ENCODE measurements at regions of chr2 and their contacts with region 1.

Region 1: GRCh38 chr2:38619458-38620164 is 16.9 kb upstream of the HNRNPLL start:
- DNase-seq: no peak
- H3K4me3 Mint-ChIP-seq: no peak overlapping the region
- H3K27ac Mint-ChIP-seq: peak overlapping the region; percentile 19
- H3K4me1 Mint-ChIP-seq: peaks cover 53% of the 10 kb centered on the region
- H3K27me3 Mint-ChIP-seq: no peaks in the 10 kb centered on the region

Region 2: GRCh38 chr2:38602732-38603401 is 16.7 kb before region 1 on chr2 and contains the start of gene HNRNPLL:
- intact Hi-C with region 1: no loop called
- DNase-seq: peak; percentile 95
- H3K4me3 Mint-ChIP-seq: peak within 1 kb of the TSS; percentile 90
- H3K27ac Mint-ChIP-seq: peak within 1 kb of the TSS; percentile 91
- H3K4me1 Mint-ChIP-seq: peaks cover 59% of the 10 kb centered on the region
- H3K27me3 Mint-ChIP-seq: no peaks in the 10 kb centered on the region
- total RNA-seq, gene HNRNPLL: 65.7 and 67.7 TPM in 2 replicates

Region 3: DNA sequence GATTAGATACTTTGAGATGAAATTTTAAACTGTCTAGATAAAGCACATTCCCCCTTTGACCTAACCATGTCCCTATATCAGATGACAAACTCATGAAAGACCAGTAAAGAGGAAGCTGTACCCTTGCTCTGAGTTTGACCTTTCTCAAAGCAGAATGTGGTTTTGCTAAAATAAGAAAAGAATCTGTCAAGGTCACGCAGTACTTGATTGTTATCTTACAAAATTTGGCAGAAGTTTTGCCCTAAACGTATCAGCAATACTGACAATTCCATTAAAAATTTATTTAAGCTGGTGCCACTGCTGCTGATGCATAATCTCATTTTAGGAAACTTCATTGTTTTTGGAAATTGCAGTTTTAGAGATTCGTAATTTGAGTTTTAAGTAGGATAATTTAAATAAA is 15.1 kb after region 1 on chr2:
- intact Hi-C with region 1: loop called (anchors 2 kb)
- DNase-seq: no peak
- H3K4me3 Mint-ChIP-seq: peak overlapping the region; percentile 8
- H3K27ac Mint-ChIP-seq: peak overlapping the region; percentile 21
- H3K4me1 Mint-ChIP-seq: peaks cover 50% of the 10 kb centered on the region
- H3K27me3 Mint-ChIP-seq: no peaks in the 10 kb centered on the region

Measured in activated T-helper 2 cell treated with anti-CD3 and anti-CD28 coated beads, Interferon-gamma antibody, Interleukin-2, Interleukin-4, amounts not matched to agents 10 μg/mL and 5 μg/mL and 100 μg/mL, durations not matched to agents 14 hours and 24 hours and 36 hours (primary cell).